ENCODE measurements at regions of chr12 and their contacts with region 1.

Region 1: GRCh38 chr12:57370696-57371095 is 60.1 kb downstream of the R3HDM2 start:
- DNase-seq: no peak
- ATAC-seq: no peak
- H3K4me3 ChIP-seq: no peak overlapping the region
- H3K4me3 Mint-ChIP-seq: no peak overlapping the region
- H3K27ac ChIP-seq: no peak overlapping the region
- H3K27ac Mint-ChIP-seq: no peak overlapping the region
- H3K4me1 ChIP-seq: no peaks in the 10 kb centered on the region
- H3K4me1 Mint-ChIP-seq: peaks cover 14% of the 10 kb centered on the region
- H3K27me3 ChIP-seq: no peaks in the 10 kb centered on the region
- H3K27me3 Mint-ChIP-seq: no peaks in the 10 kb centered on the region
- CTCF ChIP-seq: no peak

Region 2: DNA sequence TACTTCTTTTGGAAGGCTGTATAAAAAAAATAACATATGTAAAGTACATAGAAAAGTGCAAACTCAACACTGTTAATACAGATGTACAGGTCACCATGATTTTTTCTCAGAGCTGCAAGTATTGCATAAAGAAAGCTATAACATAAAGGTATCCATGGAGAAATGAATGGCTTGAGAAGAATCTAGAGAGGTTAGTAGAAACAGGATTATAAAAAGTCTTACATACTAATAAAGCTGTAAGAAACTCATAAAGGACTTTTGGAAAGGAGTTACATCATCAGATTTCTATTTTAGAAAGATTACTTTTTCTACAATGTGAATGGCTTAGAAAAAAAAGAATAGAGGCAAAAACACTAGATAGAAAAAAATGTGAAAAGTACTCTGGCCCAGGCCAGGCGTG is 13.8 kb after region 1 on chr12:
- CTCF ChIA-PET with region 1: no interaction called
- POLR2A ChIA-PET with region 1: no interaction called
- intact Hi-C with region 1: no loop called
- DNase-seq: no peak
- ATAC-seq: no peak
- H3K4me3 ChIP-seq: no peak overlapping the region
- H3K4me3 Mint-ChIP-seq: no peak overlapping the region
- H3K27ac ChIP-seq: no peak overlapping the region
- H3K27ac Mint-ChIP-seq: no peak overlapping the region
- H3K4me1 ChIP-seq: no peaks in the 10 kb centered on the region
- H3K4me1 Mint-ChIP-seq: peaks cover 7% of the 10 kb centered on the region
- H3K27me3 ChIP-seq: no peaks in the 10 kb centered on the region
- H3K27me3 Mint-ChIP-seq: no peaks in the 10 kb centered on the region
- CTCF ChIP-seq: no peak

Region 3: GRCh38 chr12:57395121-57395520 is 24.4 kb after region 1 on chr12:
- CTCF ChIA-PET with region 1: no interaction called
- POLR2A ChIA-PET with region 1: no interaction called
- intact Hi-C with region 1: loop called in 1 of 2 experiments (anchors 1 kb)
- DNase-seq: no peak
- ATAC-seq: no peak
- H3K4me3 ChIP-seq: no peak overlapping the region
- H3K4me3 Mint-ChIP-seq: no peak overlapping the region
- H3K27ac ChIP-seq: no peak overlapping the region
- H3K27ac Mint-ChIP-seq: no peak overlapping the region
- H3K4me1 ChIP-seq: no peaks in the 10 kb centered on the region
- H3K4me1 Mint-ChIP-seq: peaks cover 14% of the 10 kb centered on the region
- H3K27me3 ChIP-seq: no peaks in the 10 kb centered on the region
- H3K27me3 Mint-ChIP-seq: no peaks in the 10 kb centered on the region
- CTCF ChIP-seq: no peak

Region 4: GRCh38 chr12:57998251-57998650 is 627.6 kb after region 1 on chr12:
- CTCF ChIA-PET with region 1: no interaction called
- POLR2A ChIA-PET with region 1: no interaction called
- intact Hi-C with region 1: no loop called
- DNase-seq: no peak
- ATAC-seq: no peak
- H3K4me3 ChIP-seq: no peak overlapping the region
- H3K4me3 Mint-ChIP-seq: no peak overlapping the region
- H3K27ac ChIP-seq: no peak overlapping the region
- H3K27ac Mint-ChIP-seq: no peak overlapping the region
- H3K4me1 ChIP-seq: no peaks in the 10 kb centered on the region
- H3K4me1 Mint-ChIP-seq: no peaks in the 10 kb centered on the region
- H3K27me3 ChIP-seq: no peaks in the 10 kb centered on the region
- H3K27me3 Mint-ChIP-seq: peaks cover 7% of the 10 kb centered on the region
- CTCF ChIP-seq: no peak